ENCODE measurements at regions of chr6 and their contacts with region 1.

Region 1: DNA sequence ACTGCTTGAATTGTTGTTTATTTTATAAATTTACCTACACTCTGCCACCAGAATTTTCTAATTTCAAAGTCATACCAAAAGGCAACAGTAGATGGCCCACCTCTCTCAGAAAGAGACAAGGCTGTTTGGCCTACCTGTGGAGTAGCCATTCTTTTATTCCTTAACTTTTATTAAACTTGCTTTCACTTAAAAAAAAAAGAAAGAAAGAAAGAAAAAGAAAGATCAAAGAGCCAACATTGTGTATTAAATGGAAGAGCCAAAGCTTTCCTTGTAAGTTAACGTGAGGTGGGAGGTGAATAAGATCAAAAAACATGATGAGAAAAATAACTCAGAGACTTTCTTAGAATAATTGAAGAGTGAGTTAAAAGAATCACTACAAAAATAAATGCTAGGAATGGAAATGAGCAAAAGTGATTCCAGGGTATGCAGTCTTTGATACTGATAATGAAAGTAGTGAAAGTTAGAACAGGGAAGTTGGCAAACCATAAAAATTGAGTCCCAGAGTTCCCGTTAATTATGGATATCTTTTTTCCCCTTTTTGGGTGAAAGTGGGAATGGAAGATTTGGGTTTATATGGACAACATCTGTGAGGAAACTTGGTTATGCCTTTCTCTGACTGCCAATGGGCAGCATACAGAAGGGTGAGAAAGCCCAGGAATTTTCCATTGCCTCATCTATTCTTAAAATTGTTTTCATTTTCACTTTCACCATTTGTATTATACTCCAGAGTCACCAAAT is 35.9 kb upstream of the MYB start:
- DNase-seq: no peak
- ATAC-seq: peak; percentile 75
- H3K4me3 ChIP-seq: 0 out of 2 replicates have a peak overlapping the region, but pooled peaks have one; percentile 18
- H3K27ac ChIP-seq: 0 out of 2 replicates have a peak overlapping the region, but pooled peaks have one; percentile 29
- H3K4me1 ChIP-seq: peaks cover 40% of the 10 kb centered on the region
- H3K27me3 ChIP-seq: no peaks in the 10 kb centered on the region
- CTCF ChIP-seq: peak; percentile 50 to 72 (median 65)
- EP300 ChIP-seq: no peak
- POLR2A ChIP-seq: no peak
- RAD21 ChIP-seq: peak; percentile 93

Region 2: DNA sequence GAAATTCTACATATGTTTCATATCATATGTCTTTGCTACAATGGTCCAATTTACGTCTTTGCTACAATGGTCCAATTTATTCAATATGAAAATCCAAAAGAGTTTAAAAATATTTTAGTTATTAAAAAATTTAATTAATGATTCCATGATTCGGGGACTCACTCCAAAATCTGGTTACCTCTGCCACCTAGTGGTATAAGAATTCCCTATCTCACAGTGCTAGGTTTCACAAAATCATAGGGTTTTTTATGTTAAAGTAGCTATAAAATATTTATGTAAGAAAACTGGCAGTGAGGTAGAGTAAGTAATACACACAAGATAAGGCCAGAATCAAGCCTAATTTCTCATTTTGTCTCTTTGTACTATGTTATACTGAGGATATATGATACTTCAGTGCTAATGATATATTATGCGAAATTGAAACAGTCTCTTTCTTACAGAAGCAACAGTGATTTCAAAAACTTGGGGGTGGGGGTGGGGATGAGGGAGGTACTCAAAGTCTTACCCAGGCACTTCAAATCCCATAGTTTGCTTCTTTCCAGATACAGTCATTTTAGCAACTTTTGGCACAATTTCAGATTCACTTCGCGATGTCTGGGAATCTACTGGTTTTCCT is 142.9 kb before region 1 on chr6:
- CTCF ChIA-PET with region 1: interaction called, 5 read pairs
- POLR2A ChIA-PET with region 1: interaction called, 4 read pairs
- RAD21 ChIA-PET with region 1: interaction called, 7 read pairs
- SMC1A ChIA-PET with region 1: interaction called, 13 read pairs
- in situ Hi-C with region 1: no loop called
- intact Hi-C with region 1: loop called (anchors 1 kb)
- DNase-seq: no peak
- ATAC-seq: peak; percentile 64
- H3K4me3 ChIP-seq: no peak overlapping the region; the same call in 1 of the 2 replicates
- H3K27ac ChIP-seq: peak overlapping the region; percentile 88
- H3K4me1 ChIP-seq: peaks cover 11% of the 10 kb centered on the region
- H3K27me3 ChIP-seq: no peaks in the 10 kb centered on the region
- CTCF ChIP-seq: peak; percentile 42 to 45 (median 44); a peak in 4 of 6 replicates
- EP300 ChIP-seq: no peak
- POLR2A ChIP-seq: no peak
- RAD21 ChIP-seq: peak; percentile 65

Region 3: GRCh38 chr6:135094403-135094848 is 50.8 kb before region 1 on chr6:
- CTCF ChIA-PET with region 1: interaction called, 46 read pairs
- POLR2A ChIA-PET with region 1: interaction called, 5 read pairs
- RAD21 ChIA-PET with region 1: interaction called, 5 read pairs
- SMC1A ChIA-PET with region 1: interaction called, 19 read pairs
- in situ Hi-C with region 1: no loop called
- intact Hi-C with region 1: no loop called
- DNase-seq: no peak
- ATAC-seq: peak; percentile 81
- H3K4me3 ChIP-seq: no peak overlapping the region
- H3K27ac ChIP-seq: no peak overlapping the region
- H3K4me1 ChIP-seq: peaks cover 11% of the 10 kb centered on the region; the same call in 1 of the 2 replicates
- H3K27me3 ChIP-seq: no peaks in the 10 kb centered on the region; a peak in 1 of 4 replicates
- CTCF ChIP-seq: no peak
- EP300 ChIP-seq: no peak
- POLR2A ChIP-seq: no peak
- RAD21 ChIP-seq: no peak

Region 4: GRCh38 chr6:135128268-135128914 is 16.8 kb before region 1 on chr6:
- CTCF ChIA-PET with region 1: interaction called, 25 read pairs
- POLR2A ChIA-PET with region 1: interaction called, 5 read pairs
- RAD21 ChIA-PET with region 1: interaction called, 30 read pairs
- SMC1A ChIA-PET with region 1: interaction called, 30 read pairs
- in situ Hi-C with region 1: no loop called
- intact Hi-C with region 1: no loop called
- DNase-seq: no peak
- ATAC-seq: peak; percentile 97
- H3K4me3 ChIP-seq: no peak overlapping the region
- H3K27ac ChIP-seq: peak overlapping the region; percentile 45; the same call in 1 of the 2 replicates
- H3K4me1 ChIP-seq: peaks cover 8% of the 10 kb centered on the region
- H3K27me3 ChIP-seq: no peaks in the 10 kb centered on the region
- CTCF ChIP-seq: no peak
- EP300 ChIP-seq: no peak
- POLR2A ChIP-seq: no peak
- RAD21 ChIP-seq: no peak

Region 5: GRCh38 chr6:135191508-135192255 is 46.5 kb after region 1 on chr6:
- CTCF ChIA-PET with region 1: interaction called, 26 read pairs
- POLR2A ChIA-PET with region 1: interaction called, 4 read pairs
- RAD21 ChIA-PET with region 1: interaction called, 15 read pairs
- SMC1A ChIA-PET with region 1: interaction called, 133 read pairs
- in situ Hi-C with region 1: no loop called
- intact Hi-C with region 1: no loop called
- DNase-seq: no peak
- ATAC-seq: peak; percentile 78
- H3K4me3 ChIP-seq: no peak overlapping the region
- H3K27ac ChIP-seq: peak overlapping the region; percentile 56
- H3K4me1 ChIP-seq: peaks cover 9% of the 10 kb centered on the region; the same call in 1 of the 2 replicates
- H3K27me3 ChIP-seq: no peaks in the 10 kb centered on the region
- CTCF ChIP-seq: no peak
- EP300 ChIP-seq: no peak
- POLR2A ChIP-seq: no peak
- RAD21 ChIP-seq: no peak

Region 6: GRCh38 chr6:135372758-135373157 is 227.5 kb after region 1 on chr6:
- CTCF ChIA-PET with region 1: no interaction called
- POLR2A ChIA-PET with region 1: no interaction called
- RAD21 ChIA-PET with region 1: no interaction called
- SMC1A ChIA-PET with region 1: no interaction called
- in situ Hi-C with region 1: no loop called
- intact Hi-C with region 1: no loop called
- DNase-seq: no peak
- ATAC-seq: peak; percentile 70
- H3K4me3 ChIP-seq: no peak overlapping the region
- H3K27ac ChIP-seq: no peak overlapping the region
- H3K4me1 ChIP-seq: no peaks in the 10 kb centered on the region; the same call in 1 of the 2 replicates
- H3K27me3 ChIP-seq: no peaks in the 10 kb centered on the region
- CTCF ChIP-seq: no peak
- EP300 ChIP-seq: no peak
- POLR2A ChIP-seq: no peak
- RAD21 ChIP-seq: no peak

Region 7: DNA sequence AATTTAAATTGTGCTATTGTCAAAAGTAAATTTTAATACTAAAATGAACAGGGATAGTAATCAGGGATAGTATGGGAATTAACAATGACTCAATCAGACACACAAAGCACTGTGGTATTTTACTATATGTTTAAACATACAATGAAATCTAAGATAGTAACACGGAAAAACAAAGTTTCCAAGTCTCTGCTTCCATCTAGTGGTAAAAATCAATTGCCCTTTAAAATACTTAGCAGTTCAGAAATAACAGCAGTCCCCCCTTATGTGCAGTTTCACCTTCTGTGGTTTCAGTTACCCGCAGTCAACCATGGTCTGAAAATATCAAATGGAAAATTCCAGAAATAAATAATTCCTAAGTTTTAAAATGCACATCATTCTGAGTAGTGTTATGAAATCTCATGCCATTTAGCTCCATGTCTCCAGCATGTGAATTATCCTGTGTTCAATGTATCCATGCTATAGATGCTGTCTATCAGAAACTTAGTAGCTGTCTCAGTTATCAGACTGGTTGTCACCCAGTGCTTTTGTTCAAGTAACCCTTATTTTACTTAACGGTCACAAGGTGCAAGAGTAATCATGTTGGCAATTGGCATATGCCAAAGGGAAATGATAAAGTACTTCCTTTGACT is 293.8 kb after region 1 on chr6:
- CTCF ChIA-PET with region 1: interaction called, 19 read pairs
- POLR2A ChIA-PET with region 1: no interaction called
- RAD21 ChIA-PET with region 1: interaction called, 6 read pairs
- SMC1A ChIA-PET with region 1: interaction called, 10 read pairs
- in situ Hi-C with region 1: no loop called
- intact Hi-C with region 1: loop called (anchors 1 kb)
- DNase-seq: peak; percentile 17
- ATAC-seq: peak; percentile 83
- H3K4me3 ChIP-seq: no peak overlapping the region
- H3K27ac ChIP-seq: no peak overlapping the region
- H3K4me1 ChIP-seq: peaks cover 11% of the 10 kb centered on the region
- H3K27me3 ChIP-seq: no peaks in the 10 kb centered on the region
- CTCF ChIP-seq: peak; percentile 55 to 66 (median 58)
- EP300 ChIP-seq: no peak
- POLR2A ChIP-seq: no peak
- RAD21 ChIP-seq: peak; percentile 74